KBM-7 (cell line): ENCODE measurements at regions of chr7 and their contacts with region 1.

Region 1: GRCh38 chr7:27235387-27236311 is 7.0 kb upstream of the EVX1 start:
- DNase-seq: peak; percentile 83

Region 2: GRCh38 chr7:26993816-26994810 is 241.5 kb before region 1 on chr7:
- in situ Hi-C with region 1: no loop called
- DNase-seq: no peak

Region 3: DNA sequence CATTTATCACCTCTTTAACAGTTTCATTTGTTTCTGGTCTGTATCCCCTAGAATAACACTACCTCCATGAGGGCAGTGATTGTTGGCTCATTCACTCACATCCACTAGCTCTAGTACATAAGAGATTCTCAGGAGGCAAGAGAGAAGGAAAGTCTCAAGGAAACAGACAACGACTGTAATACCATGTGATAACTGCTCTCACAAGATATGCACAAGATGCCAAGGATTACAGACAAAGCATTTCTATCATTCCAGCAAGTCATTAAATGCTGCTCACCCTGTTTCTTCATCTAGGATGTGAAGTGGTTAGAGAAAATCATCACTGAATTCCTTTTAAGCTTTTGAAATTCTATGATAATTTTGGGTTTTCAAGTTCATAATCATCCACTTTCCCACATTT is 311.8 kb after region 1 on chr7:
- in situ Hi-C with region 1: no loop called
- DNase-seq: no peak

Region 4: DNA sequence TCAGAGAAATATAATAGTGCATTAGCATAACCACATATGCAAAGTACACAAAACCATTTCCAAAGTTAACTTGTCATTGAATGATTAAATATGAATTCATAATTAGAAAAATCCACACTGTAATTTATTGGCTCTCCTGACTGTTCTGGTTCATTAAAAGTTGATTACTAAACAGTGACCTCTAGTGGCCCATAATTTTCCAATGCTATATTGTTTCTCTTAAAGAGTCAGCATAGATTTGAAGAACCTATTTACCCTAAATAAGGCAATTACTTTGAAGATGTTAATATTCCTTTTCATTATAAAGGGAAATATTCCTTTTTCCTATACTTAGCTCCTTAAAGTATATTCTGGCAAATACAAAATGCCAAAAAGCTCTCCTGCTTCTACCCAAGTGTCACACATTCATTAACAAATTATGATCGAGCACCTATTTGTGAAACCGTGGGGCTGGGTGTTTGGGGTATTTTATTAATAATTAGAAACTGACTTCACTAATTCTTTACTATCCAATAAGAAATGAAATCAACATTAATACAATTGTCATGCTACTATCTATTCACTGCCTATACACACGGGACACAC is 340.8 kb after region 1 on chr7:
- in situ Hi-C with region 1: loop called (anchors 25 kb)
- DNase-seq: peak; percentile 68